ENCODE measurements at regions of chr19 and their contacts with region 1.

Region 1: GRCh38 chr19:53311044-53311443 is 22.5 kb upstream of the ZNF845 start:
- DNase-seq: no peak
- H3K4me3 ChIP-seq: no peak overlapping the region
- H3K27ac ChIP-seq: no peak overlapping the region
- H3K4me1 ChIP-seq: peaks cover 0 to 5% (median 2%) of the 10 kb centered on the region in 4 donors
- H3K27me3 ChIP-seq: peaks cover 14% of the 10 kb centered on the region
- CTCF ChIP-seq: no peak
- EP300 ChIP-seq: no peak
- POLR2A ChIP-seq: no peak

Region 2: DNA sequence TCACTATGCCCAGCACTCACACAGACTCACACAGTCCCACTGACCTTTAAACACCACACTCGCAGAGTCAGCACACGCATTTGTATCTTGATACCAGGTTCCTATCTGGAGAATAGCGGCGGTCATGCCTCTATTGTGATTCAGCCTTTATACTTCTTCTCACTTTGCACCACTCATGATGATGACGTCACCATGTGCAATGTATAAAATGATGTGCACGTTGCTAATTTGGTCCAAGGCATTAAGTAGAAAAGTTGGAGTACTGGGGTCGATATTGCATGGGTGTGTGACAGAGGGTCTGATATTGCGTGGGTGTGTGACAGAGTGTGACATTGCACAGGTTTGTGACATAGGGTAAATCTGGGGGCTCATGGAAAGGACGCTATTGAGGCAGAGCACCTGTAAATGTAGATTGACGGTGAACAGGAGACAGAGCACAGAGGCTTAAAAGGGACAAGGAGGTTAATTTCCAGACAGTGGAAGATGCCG is 39.0 kb before region 1 on chr19:
- in situ Hi-C with region 1: loop called in 1 of 4 experiments (anchors 5 kb)
- intact Hi-C with region 1: no loop called
- DNase-seq: no peak
- H3K4me3 ChIP-seq: no peak overlapping the region
- H3K27ac ChIP-seq: no peak overlapping the region
- H3K4me1 ChIP-seq: no peaks in the 10 kb centered on the region
- H3K27me3 ChIP-seq: no peaks in the 10 kb centered on the region
- CTCF ChIP-seq: no peak
- EP300 ChIP-seq: no peak
- POLR2A ChIP-seq: no peak